Activated naive CD4-positive, alpha-beta T cell treated with anti-CD3 and anti-CD28 coated beads for 36 hours (primary cell): ENCODE measurements at regions of chr2 and their contacts with region 1.

Region 1: GRCh38 chr2:203706403-203706802 is at the start of gene CD28:
- DNase-seq: peak; percentile 97
- H3K4me3 Mint-ChIP-seq: peak within 1 kb of the TSS; percentile 89
- H3K27ac Mint-ChIP-seq: peak within 1 kb of the TSS; percentile 93
- H3K4me1 Mint-ChIP-seq: peaks cover 37% of the 10 kb centered on the region
- H3K27me3 Mint-ChIP-seq: no peaks in the 10 kb centered on the region
- total RNA-seq, gene CD28: 165 to 167 TPM

Region 2: GRCh38 chr2:203535078-203535783 is 171.2 kb before region 1 on chr2 and contains the start of gene RAPH1:
- CTCF ChIA-PET with region 1: no interaction called
- intact Hi-C with region 1: loop called (anchors 1 kb)
- DNase-seq: peak; percentile 79
- H3K4me3 Mint-ChIP-seq: peak within 1 kb of the TSS; percentile 82
- H3K27ac Mint-ChIP-seq: peak within 1 kb of the TSS; percentile 61
- H3K4me1 Mint-ChIP-seq: peaks cover 21% of the 10 kb centered on the region
- H3K27me3 Mint-ChIP-seq: peaks cover 6% of the 10 kb centered on the region
- total RNA-seq, gene RAPH1: 8.6 to 11.9 TPM

Region 3: GRCh38 chr2:203683932-203684556 is 22.4 kb before region 1 on chr2:
- CTCF ChIA-PET with region 1: no interaction called
- intact Hi-C with region 1: loop called (anchors 1 kb)
- DNase-seq: peak; percentile 77
- H3K4me3 Mint-ChIP-seq: no peak overlapping the region
- H3K27ac Mint-ChIP-seq: no peak overlapping the region
- H3K4me1 Mint-ChIP-seq: peaks cover 32% of the 10 kb centered on the region
- H3K27me3 Mint-ChIP-seq: no peaks in the 10 kb centered on the region

Region 4: DNA sequence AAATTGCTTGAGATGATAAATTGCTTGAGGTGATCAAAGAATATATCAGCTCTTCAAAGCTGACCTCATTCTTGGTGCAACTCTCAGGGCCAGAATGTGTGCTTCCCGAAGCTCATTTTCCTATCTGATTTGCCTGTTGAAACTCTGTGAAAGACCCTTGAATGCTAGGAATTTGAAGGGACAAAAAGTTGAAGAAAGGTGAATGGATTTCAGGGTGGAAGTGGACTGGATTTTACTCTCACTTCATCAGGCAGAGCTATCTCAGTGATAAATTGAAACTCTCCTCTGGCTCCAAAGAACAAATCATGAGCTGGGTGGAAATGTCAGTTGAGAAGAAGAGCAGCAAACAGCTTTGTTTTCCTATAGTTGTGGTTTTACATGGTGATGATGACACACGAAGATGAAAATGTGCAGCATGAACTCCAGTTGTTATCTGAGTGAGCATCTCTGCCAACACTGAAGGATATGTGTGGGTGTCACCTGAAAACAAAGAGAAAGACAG is 34.4 kb after region 1 on chr2:
- CTCF ChIA-PET with region 1: interaction called, 13 read pairs
- intact Hi-C with region 1: loop called (anchors 1 kb)
- DNase-seq: peak; percentile 69
- H3K4me3 Mint-ChIP-seq: peak overlapping the region; percentile 54
- H3K27ac Mint-ChIP-seq: peak overlapping the region; percentile 97
- H3K4me1 Mint-ChIP-seq: peaks cover 88% of the 10 kb centered on the region
- H3K27me3 Mint-ChIP-seq: no peaks in the 10 kb centered on the region

Region 5: GRCh38 chr2:203759690-203760365 is 53.4 kb after region 1 on chr2:
- CTCF ChIA-PET with region 1: no interaction called
- intact Hi-C with region 1: loop called (anchors 1 kb)
- DNase-seq: no peak
- H3K4me3 Mint-ChIP-seq: no peak overlapping the region
- H3K27ac Mint-ChIP-seq: no peak overlapping the region
- H3K4me1 Mint-ChIP-seq: peaks cover 59% of the 10 kb centered on the region
- H3K27me3 Mint-ChIP-seq: no peaks in the 10 kb centered on the region

Region 6: DNA sequence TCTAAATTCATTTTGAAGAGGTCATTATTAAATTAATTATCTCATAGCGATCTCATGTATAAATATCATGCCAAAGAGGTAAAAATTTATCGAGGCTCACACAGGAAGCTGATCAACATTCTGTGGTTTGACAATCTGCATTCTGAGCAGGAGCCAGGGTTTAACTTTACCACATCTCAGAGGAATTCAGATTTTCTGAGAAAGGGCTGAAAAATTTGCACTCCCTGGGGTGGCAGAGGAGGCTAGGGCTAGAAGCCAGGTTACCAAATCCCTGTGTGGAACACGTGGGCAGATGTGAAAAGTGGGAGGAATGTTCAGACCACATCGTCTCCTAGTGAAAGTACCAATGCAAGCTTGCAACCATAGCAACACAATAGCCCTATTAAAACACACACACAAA is 97.7 kb after region 1 on chr2:
- CTCF ChIA-PET with region 1: no interaction called
- intact Hi-C with region 1: loop called (anchors 1 kb)
- DNase-seq: peak; percentile 55
- H3K4me3 Mint-ChIP-seq: no peak overlapping the region
- H3K27ac Mint-ChIP-seq: peak overlapping the region; percentile 27
- H3K4me1 Mint-ChIP-seq: peaks cover 75% of the 10 kb centered on the region
- H3K27me3 Mint-ChIP-seq: no peaks in the 10 kb centered on the region

Region 7: DNA sequence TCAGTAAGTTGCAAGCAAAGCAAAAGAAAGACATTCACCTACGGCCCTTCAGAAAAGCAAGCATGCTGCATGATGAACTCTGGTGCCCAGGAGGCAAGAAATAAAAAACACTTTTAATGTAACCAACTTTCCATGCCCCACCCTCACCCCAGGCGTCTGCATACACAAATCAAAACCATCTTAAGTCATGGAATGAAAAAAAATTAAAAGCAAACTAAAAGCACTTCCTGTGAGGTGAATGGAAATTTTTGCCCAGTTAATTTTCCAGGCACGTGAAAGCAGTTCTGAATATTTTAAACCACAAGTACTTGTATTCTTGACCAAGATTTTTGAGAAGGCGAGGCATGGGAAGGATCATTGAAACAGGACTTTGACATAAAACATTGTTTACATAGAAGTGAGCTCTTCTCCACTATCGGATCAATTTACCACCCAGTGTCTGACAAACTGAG is 227.7 kb after region 1 on chr2:
- CTCF ChIA-PET with region 1: no interaction called
- intact Hi-C with region 1: loop called (anchors 1 kb)
- DNase-seq: peak; percentile 78
- H3K4me3 Mint-ChIP-seq: peak overlapping the region; percentile 51
- H3K27ac Mint-ChIP-seq: peak overlapping the region; percentile 96
- H3K4me1 Mint-ChIP-seq: peaks cover 64% of the 10 kb centered on the region
- H3K27me3 Mint-ChIP-seq: no peaks in the 10 kb centered on the region